Calu3 (cell line): ENCODE measurements at regions of chr17 and their contacts with region 1.

Region 1: GRCh38 chr17:48543107-48543853 is 1.6 kb downstream of the HOXB2 start:
- DNase-seq: peak; percentile 74
- H3K4me3 Mint-ChIP-seq: peak overlapping the region; percentile 68
- H3K27ac Mint-ChIP-seq: peak overlapping the region; percentile 83
- H3K4me1 Mint-ChIP-seq: peaks cover 31% of the 10 kb centered on the region
- H3K27me3 Mint-ChIP-seq: peaks cover 56% of the 10 kb centered on the region
- CTCF ChIP-seq: no peak

Region 2: GRCh38 chr17:47821424-47822391 is 721.6 kb before region 1 on chr17 and contains the start of gene OSBPL7:
- CTCF ChIA-PET with region 1: no interaction called
- intact Hi-C with region 1: no loop called
- DNase-seq: peak; percentile 92
- H3K4me3 Mint-ChIP-seq: peak within 1 kb of the TSS; percentile 98
- H3K27ac Mint-ChIP-seq: peak within 1 kb of the TSS; percentile 89
- H3K4me1 Mint-ChIP-seq: peaks cover 20% of the 10 kb centered on the region
- H3K27me3 Mint-ChIP-seq: no peaks in the 10 kb centered on the region
- CTCF ChIP-seq: no peak
- total RNA-seq, gene OSBPL7: 58.3 and 58.4 TPM in 2 replicates

Region 3: DNA sequence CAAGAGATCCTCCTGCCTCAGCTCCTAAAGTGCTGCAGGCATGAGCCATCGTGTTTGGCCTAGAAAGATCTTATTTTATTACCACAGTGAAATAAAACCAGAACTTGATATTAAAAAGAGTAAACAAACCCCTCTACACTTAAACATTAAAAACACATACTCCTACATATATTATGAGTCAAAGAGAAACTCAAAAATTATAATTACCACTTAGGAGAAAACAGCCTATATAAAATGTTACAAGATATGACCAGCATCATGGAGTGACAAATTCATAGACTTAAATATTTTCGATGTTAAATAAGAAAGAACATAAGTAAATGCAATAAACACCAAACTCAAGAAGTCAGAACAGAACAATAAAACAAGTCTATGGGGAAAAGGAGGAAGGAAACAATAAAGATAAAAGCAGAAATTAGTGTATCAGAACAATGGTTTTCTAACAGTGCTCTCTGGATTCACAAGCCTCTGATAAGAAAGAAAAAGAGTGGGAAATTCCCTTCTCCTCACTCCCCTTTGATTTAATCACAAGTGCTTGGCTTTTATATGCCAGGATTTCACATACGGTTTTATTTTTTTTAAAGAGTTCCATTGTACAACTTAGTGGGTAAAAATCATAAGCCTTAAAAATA is 136.2 kb before region 1 on chr17:
- CTCF ChIA-PET with region 1: no interaction called
- intact Hi-C with region 1: no loop called
- DNase-seq: no peak
- H3K4me3 Mint-ChIP-seq: no peak overlapping the region
- H3K27ac Mint-ChIP-seq: no peak overlapping the region
- H3K4me1 Mint-ChIP-seq: no peaks in the 10 kb centered on the region
- H3K27me3 Mint-ChIP-seq: no peaks in the 10 kb centered on the region
- CTCF ChIP-seq: no peak

Region 4: DNA sequence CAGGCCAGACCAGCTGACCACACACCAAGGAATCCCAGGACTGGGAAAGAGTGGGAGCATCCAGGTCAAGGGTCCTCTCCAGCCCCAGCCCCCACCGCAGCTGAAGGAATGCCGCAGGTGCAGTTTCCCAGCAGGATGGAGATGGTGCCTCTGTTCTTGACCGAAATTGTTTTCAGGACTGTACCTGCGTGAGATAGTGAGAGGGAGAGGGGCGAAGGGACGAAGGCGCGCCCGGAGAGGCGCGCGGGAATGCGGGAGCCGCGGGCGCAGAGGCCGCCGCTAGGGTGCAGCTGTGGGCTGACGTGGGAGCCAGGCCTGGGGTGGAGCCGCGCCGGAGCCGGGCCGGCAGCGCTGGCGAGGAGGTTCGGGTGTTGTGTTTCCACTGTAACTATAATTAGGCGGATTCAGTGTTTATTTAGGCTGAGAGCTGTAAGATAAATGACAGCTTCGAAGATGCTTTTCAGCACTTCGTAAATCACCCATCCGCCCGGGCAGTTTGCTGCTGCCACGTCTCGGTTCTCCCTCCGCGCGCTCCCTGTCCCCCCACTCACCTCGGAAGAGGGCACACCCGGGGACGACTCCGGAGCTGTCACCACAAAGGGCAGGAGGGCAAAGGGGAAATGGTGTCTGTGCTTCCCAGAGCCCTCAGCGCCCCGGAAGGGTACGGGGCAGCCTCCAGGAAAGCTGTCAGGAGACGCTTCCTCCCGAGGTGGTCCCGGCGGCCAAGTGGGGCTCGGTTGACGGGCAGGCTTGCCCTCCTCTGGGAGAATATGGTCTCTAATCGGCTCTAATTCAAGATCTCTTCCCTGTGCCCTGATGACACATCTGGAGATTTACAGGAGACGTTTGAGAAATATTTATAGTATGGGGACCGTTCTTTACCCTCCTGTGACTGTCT is 50.6 kb before region 1 on chr17:
- CTCF ChIA-PET with region 1: interaction called, 3 read pairs
- intact Hi-C with region 1: loop called (anchors 5 kb)
- DNase-seq: peak; percentile 90
- H3K4me3 Mint-ChIP-seq: peak overlapping the region; percentile 60
- H3K27ac Mint-ChIP-seq: no peak overlapping the region
- H3K4me1 Mint-ChIP-seq: peaks cover 53% of the 10 kb centered on the region
- H3K27me3 Mint-ChIP-seq: no peaks in the 10 kb centered on the region
- CTCF ChIP-seq: peak; percentile 96

Region 5: GRCh38 chr17:48505787-48506645 is 37.3 kb before region 1 on chr17:
- CTCF ChIA-PET with region 1: interaction called, 5 read pairs
- intact Hi-C with region 1: loop called (anchors 5 kb)
- DNase-seq: peak; percentile 66
- H3K4me3 Mint-ChIP-seq: no peak overlapping the region
- H3K27ac Mint-ChIP-seq: no peak overlapping the region
- H3K4me1 Mint-ChIP-seq: peaks cover 17% of the 10 kb centered on the region
- H3K27me3 Mint-ChIP-seq: peaks cover 35% of the 10 kb centered on the region
- CTCF ChIP-seq: peak; percentile 27

Region 6: GRCh38 chr17:48528153-48528935 is 14.9 kb before region 1 on chr17:
- CTCF ChIA-PET with region 1: no interaction called
- intact Hi-C with region 1: no loop called
- DNase-seq: no peak
- H3K4me3 Mint-ChIP-seq: no peak overlapping the region
- H3K27ac Mint-ChIP-seq: no peak overlapping the region
- H3K4me1 Mint-ChIP-seq: no peaks in the 10 kb centered on the region
- H3K27me3 Mint-ChIP-seq: peaks cover 75% of the 10 kb centered on the region
- CTCF ChIP-seq: no peak

Region 7: GRCh38 chr17:48577946-48578615 is 34.8 kb after region 1 on chr17 and contains the start of gene HOXB4:
- CTCF ChIA-PET with region 1: no interaction called
- intact Hi-C with region 1: loop called (anchors 5 kb)
- DNase-seq: peak; percentile 88
- H3K4me3 Mint-ChIP-seq: no peak within 1 kb of the TSS
- H3K27ac Mint-ChIP-seq: peak within 1 kb of the TSS; percentile 95
- H3K4me1 Mint-ChIP-seq: peaks cover 50% of the 10 kb centered on the region
- H3K27me3 Mint-ChIP-seq: peaks cover 20% of the 10 kb centered on the region
- CTCF ChIP-seq: no peak
- total RNA-seq, gene HOXB4: 28.0 and 31.1 TPM in 2 replicates